Motor neuron (in vitro differentiated cells): ENCODE measurements at regions of chr7 and their contacts with region 1.

Region 1: DNA sequence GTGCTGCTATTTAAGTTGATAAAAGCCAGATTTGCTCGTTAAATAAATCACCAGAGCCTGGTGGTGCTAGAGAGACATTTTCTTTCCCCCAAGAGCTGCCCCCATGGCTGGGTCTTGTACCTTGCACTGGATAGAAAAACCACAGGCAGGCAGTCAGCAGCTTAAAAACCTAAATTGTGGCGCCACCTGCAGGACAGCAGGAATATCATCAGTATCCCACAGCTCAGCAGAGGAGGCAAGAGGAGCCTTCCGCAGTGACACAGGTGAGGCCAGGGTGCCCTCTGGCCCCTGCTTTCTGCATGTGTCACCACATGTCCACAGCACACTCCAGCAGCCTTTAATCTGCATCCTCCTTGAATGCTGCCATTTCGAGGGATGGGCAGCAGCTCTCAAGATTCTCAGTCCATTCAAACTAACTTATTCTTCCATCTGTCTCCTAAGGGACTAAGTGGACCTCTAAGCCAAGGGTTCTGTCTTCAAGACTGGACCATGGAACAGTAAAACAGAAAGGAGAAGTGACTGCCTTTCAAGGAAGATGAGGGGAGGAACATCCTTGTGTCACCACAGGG is 4.5 kb upstream of the PLXNA4 start:
- ATAC-seq: peak; percentile 27 to 60 (median 40)
- H3K4me3 ChIP-seq: no peak overlapping the region
- H3K27ac ChIP-seq: no peak overlapping the region
- H3K4me1 ChIP-seq: peaks cover 0 to 2% of the 10 kb centered on the region in 2 donors

Region 2: GRCh38 chr7:131688738-131689661 is 891.8 kb before region 1 on chr7:
- in situ Hi-C with region 1: loop called in 4 of 9 experiments (anchors 25 kb)
- ATAC-seq: peak; percentile 25 to 71 (median 60)
- H3K4me3 ChIP-seq: no peak overlapping the region
- H3K27ac ChIP-seq: no peak overlapping the region
- H3K4me1 ChIP-seq: no peaks in the 10 kb centered on the region

Region 3: GRCh38 chr7:131945313-131945911 is 635.4 kb before region 1 on chr7:
- in situ Hi-C with region 1: loop called in 2 of 9 experiments (anchors 25 kb)
- ATAC-seq: peak; percentile 45 to 95 (median 92)
- H3K4me3 ChIP-seq: peak overlapping the region in 3 of 5 donors; percentile 17 to 25 (median 20)
- H3K27ac ChIP-seq: no peak overlapping the region
- H3K4me1 ChIP-seq: peaks cover 3 to 21% of the 10 kb centered on the region in 2 donors

Region 4: DNA sequence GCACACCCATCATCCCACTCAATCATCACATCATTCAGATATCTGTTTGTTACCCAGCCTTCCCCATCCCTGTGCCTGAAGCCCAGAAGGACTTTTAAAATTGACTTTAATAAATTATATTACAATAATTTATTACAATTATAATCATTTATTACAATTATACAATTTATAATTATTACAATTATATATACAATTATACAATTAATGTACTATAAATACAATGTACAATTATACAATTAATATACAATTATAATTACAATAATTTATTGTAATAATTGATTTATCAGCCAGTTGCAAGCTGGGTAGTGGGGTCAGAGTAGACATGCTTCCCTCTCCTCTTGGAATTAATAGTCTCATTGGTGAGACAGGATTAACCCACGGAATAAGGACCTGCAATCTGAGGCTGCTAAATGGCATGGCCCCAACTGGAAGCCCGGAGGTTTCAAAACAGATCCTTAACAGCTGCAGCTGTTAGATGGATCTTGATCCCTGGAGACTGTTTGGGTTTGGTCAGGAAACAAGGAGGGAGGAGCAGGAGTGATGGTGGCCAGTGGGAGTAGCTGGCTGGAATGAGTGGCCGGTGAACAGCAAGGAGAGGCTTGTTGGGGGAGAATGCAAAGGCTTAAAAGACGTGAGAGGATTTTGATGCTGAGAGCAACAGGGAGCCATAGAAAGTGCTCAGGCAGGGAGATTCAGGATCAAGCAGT is 621.5 kb before region 1 on chr7:
- in situ Hi-C with region 1: loop called in 1 of 9 experiments (anchors 25 kb)
- ATAC-seq: peak in 2 of 8 experiments; percentile 68 to 89
- H3K4me3 ChIP-seq: no peak overlapping the region
- H3K27ac ChIP-seq: no peak overlapping the region
- H3K4me1 ChIP-seq: peaks cover 4 to 16% of the 10 kb centered on the region in 2 donors

Region 5: GRCh38 chr7:132318352-132319318 is 262.2 kb before region 1 on chr7:
- in situ Hi-C with region 1: loop called in 3 of 9 experiments (anchors 25 kb)
- ATAC-seq: peak; percentile 96 to 98 (median 97)
- H3K4me3 ChIP-seq: no peak overlapping the region
- H3K27ac ChIP-seq: no peak overlapping the region
- H3K4me1 ChIP-seq: peaks cover 0 to 3% of the 10 kb centered on the region in 2 donors

Region 6: GRCh38 chr7:132899833-132900232 is 319.0 kb after region 1 on chr7:
- in situ Hi-C with region 1: no loop called
- ATAC-seq: no peak
- H3K4me3 ChIP-seq: no peak overlapping the region
- H3K27ac ChIP-seq: no peak overlapping the region
- H3K4me1 ChIP-seq: no peaks in the 10 kb centered on the region